GM10248 (cell line): ENCODE measurements at regions of chr1 and their contacts with region 1.

Region 1: DNA sequence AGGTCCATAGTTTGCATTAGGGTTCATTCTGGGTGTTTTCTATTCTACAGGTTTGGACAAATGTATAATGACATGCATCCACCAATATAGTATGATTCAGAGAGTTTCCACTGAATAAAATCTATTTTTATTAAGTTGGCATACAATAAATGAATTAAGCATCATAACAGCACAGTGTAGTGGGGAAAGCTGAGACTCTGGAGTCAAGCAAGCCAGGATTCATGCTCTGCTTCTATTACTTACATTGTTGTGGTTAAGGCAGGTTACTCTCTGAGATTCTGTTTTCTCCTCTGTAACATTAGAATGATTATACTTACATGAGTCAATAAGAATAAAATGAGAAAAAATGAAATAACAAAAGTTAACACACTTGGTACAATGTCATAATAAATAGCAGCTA is 131.3 kb downstream of the SLC30A10 start:
- DNase-seq: no peak
- CTCF ChIP-seq: no peak

Region 2: DNA sequence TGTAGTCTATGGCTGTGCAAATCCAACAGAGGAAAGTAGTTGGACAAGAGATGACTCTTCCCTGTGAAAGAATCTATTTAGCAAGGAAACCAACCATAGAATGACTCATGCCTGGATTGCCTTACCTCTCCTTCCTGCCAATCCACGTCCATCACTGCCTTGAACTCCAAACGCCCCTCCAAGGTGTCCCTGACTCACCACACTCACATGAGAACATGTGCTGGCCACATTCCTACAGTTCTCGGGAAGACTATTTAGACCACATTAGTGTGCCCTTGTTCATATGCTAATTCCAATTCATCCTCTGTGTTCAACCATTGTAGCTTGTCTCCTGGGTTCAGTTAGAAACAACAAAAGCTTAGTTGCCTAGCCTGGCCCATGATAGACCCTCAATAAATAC is 25.9 kb before region 1 on chr1:
- CTCF ChIA-PET with region 1: no interaction called
- POLR2A ChIA-PET with region 1: no interaction called
- DNase-seq: no peak
- CTCF ChIP-seq: no peak

Region 3: GRCh38 chr1:219784660-219785381 is 12.2 kb before region 1 on chr1:
- CTCF ChIA-PET with region 1: no interaction called
- POLR2A ChIA-PET with region 1: no interaction called
- DNase-seq: no peak
- CTCF ChIP-seq: no peak

Region 4: GRCh38 chr1:219812491-219813203 is 15.6 kb after region 1 on chr1:
- CTCF ChIA-PET with region 1: interaction called, 20 read pairs
- POLR2A ChIA-PET with region 1: no interaction called
- DNase-seq: peak; percentile 53
- CTCF ChIP-seq: peak; percentile 88

Region 5: GRCh38 chr1:220007438-220007837 is 210.4 kb after region 1 on chr1:
- CTCF ChIA-PET with region 1: no interaction called
- POLR2A ChIA-PET with region 1: no interaction called
- DNase-seq: no peak
- CTCF ChIP-seq: no peak

Region 6: GRCh38 chr1:220473440-220473839 is 676.4 kb after region 1 on chr1:
- CTCF ChIA-PET with region 1: no interaction called
- POLR2A ChIA-PET with region 1: interaction called, 11 read pairs
- DNase-seq: no peak
- CTCF ChIP-seq: no peak